ENCODE measurements at regions of chr16 and their contacts with region 1.

Region 1: GRCh38 chr16:58487566-58488351 is 12.2 kb upstream of the NDRG4 start:
- DNase-seq: peak; percentile 78 to 84 (median 84)
- ATAC-seq: peak; percentile 93
- H3K4me3 ChIP-seq: no peak overlapping the region
- H3K4me1 ChIP-seq: peaks cover 5% of the 10 kb centered on the region
- CTCF ChIP-seq: peak; percentile 74

Region 2: GRCh38 chr16:58336332-58337089 is 151.2 kb before region 1 on chr16:
- intact Hi-C with region 1: loop called (anchors 5 kb)
- DNase-seq: peak; percentile 65 to 96 (median 89)
- ATAC-seq: peak; percentile 96
- H3K4me3 ChIP-seq: no peak overlapping the region
- H3K4me1 ChIP-seq: no peaks in the 10 kb centered on the region
- CTCF ChIP-seq: peak; percentile 90